ENCODE measurements at regions of chrX and their contacts with region 1.

Region 1: DNA sequence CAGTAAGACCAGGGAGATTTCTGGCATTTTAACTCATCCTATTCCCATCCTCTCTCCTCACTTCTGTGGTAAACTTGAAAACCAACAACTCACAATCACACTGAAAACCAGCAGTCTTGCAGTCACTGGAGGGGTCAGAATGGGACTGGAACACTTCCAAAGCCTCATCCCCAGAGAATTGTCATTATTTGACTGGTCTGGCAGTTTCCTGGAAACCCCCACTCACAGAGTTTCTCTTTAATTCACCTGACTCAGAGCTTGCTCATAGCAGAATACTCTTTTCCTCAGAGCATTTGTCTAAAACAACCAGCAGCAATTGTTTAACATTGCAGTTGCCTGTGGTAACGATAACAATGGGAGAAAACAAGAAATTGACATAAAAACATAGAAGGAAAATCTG is 7.3 kb upstream of the RAB9B start:
- DNase-seq: peak; percentile 41
- H3K4me3 Mint-ChIP-seq: no peak overlapping the region
- H3K27ac Mint-ChIP-seq: no peak overlapping the region
- H3K4me1 Mint-ChIP-seq: peaks cover 8% of the 10 kb centered on the region
- H3K27me3 Mint-ChIP-seq: no peaks in the 10 kb centered on the region

Region 2: DNA sequence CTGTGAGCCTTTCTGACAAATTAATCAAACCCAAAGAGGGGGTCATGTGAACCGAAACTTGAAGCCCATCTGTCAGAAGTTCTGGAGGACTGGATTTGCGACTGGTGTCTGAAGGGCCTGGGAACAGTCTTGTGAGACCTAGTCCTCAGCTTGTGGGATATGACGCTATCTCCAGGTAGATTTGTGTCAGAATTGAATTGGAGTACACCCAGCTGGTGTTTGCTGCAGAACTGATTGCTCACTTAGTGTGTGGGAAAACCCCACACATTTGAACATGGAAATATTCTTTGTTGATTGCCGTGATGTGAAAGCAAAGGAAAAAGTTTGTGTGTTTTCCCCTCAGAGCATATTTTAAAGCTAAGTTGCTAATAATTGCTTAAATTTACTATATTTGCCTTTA is 92.7 kb after region 1 on chrX:
- CTCF ChIA-PET with region 1: interaction called, 4 read pairs
- intact Hi-C with region 1: loop called (anchors 5 kb)
- DNase-seq: peak; percentile 9
- H3K4me3 Mint-ChIP-seq: no peak overlapping the region
- H3K27ac Mint-ChIP-seq: no peak overlapping the region
- H3K4me1 Mint-ChIP-seq: peaks cover 8% of the 10 kb centered on the region
- H3K27me3 Mint-ChIP-seq: no peaks in the 10 kb centered on the region

Region 3: DNA sequence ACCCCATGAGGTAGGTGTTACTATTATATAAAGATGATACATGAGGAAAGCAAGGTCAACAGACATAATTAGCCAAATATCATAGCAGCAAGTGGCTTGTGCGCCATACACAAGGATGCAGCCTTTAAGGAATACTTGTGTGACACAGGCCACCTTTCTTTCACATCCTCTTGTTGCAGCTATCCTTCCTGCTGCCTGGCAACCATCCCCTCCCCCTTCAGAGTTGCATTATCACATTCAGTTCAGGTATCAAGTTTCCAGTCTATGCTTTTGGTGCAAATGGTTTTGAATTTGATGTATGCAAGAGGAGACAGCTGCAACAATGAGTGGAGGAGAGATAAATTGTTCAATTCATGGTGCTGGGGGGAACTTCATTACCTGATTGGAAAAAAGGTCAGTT is 279.4 kb after region 1 on chrX:
- CTCF ChIA-PET with region 1: no interaction called
- intact Hi-C with region 1: loop called (anchors 5 kb)
- DNase-seq: peak; percentile 31
- H3K4me3 Mint-ChIP-seq: no peak overlapping the region
- H3K27ac Mint-ChIP-seq: no peak overlapping the region
- H3K4me1 Mint-ChIP-seq: peaks cover 37% of the 10 kb centered on the region
- H3K27me3 Mint-ChIP-seq: no peaks in the 10 kb centered on the region

Measured in activated naive CD4-positive, alpha-beta T cell treated with anti-CD3 and anti-CD28 coated beads for 36 hours (primary cell).